GM10248 (cell line): ENCODE measurements at regions of chr3 and their contacts with region 1.

Region 1: DNA sequence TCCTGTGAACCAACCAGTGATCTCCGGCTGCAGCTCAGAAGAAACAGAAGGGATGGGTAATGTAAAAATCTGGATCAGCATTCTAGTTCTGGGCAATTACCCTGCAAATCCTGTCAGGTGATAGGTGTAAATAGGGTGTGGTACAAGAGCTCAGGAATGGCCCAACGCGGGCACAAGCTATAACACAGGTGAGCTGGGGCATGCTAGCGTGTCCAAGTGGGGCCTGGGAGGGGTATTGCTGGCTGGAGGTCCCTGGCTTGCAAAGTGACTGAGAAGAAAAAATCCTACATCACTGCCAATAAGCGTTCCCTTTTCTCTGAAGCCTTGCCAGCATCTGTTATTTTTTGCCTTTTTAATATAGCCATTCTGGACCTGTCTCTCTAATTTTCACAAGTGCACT is 9.7 kb upstream of the CHST2 start:
- DNase-seq: no peak
- CTCF ChIP-seq: no peak

Region 2: DNA sequence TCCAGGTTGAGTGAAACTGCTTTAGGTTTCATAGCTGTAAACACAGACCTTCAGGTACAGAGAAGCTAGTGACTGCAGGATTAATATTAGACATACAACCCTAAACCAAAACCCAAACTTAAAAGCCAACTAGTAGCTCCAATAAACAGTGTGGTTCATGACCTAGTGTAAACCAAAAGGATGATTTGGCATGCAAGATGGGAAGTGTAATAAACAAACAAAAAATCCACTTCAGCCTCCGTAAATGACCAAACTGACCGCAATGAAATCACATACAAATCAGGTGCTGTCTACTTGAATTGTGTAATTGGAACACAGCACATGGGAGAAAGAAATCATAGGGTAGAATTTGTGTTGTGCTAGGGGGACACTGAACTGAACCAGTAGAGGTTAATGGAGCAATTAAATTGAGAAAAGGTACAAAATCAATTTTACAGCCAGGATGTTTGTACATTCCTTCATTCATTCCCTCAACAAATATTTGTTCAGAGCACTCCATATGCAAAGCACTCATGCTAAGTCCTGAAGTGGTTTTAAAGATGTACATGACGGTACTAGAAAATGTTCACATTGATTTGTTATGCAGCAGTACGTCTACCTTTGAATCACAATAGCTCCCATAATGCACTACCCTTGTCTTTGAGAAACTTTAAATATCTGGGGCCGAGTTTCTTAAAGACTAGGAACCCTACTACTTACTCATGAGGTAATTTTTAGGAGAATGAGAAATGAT is 11.7 kb before region 1 on chr3:
- CTCF ChIA-PET with region 1: interaction called, 10 read pairs
- POLR2A ChIA-PET with region 1: no interaction called
- DNase-seq: no peak
- CTCF ChIP-seq: no peak